WTC11 (cell line): ENCODE measurements at regions of chr14 and their contacts with region 1.

Region 1: DNA sequence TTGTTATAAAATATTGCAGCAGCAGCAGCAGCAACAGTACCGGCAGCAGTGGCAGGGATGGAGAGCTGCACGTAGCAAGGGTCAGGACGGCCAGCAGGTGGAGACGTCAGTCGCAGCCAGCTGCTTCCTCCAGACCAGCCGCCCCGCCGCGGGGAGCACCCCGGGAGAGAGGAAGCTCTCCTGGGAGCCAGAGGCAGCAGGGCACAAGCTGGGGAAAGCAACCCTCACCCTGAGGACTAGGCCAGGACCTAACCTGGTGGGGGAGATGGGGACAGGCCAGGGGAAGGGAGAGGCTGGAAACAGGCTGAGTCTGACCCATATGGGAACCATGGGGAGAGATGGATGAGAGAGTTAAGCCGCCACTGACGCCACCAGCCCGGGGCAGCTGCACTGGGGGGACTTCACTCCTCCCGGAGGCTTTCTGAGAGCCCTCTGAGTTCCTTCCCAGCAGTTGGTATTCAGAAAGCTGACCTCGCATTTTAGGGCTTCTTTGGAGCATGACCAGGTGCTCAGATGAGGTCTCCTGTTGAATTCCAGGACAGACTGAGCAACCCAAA is 56.3 kb downstream of the SPTB start:
- DNase-seq: peak; percentile 86
- ATAC-seq: peak; percentile 91
- H3K4me3 Mint-ChIP-seq: peak overlapping the region; percentile 31; the same call in 1 of the 2 replicates
- H3K27ac Mint-ChIP-seq: no peak overlapping the region
- H3K4me1 Mint-ChIP-seq: peaks cover 27% of the 10 kb centered on the region
- H3K27me3 Mint-ChIP-seq: peaks cover 6% of the 10 kb centered on the region; the same call in 1 of the 2 replicates
- CTCF ChIP-seq: peak; percentile 69; the same call in 1 of the 2 replicates

Region 2: DNA sequence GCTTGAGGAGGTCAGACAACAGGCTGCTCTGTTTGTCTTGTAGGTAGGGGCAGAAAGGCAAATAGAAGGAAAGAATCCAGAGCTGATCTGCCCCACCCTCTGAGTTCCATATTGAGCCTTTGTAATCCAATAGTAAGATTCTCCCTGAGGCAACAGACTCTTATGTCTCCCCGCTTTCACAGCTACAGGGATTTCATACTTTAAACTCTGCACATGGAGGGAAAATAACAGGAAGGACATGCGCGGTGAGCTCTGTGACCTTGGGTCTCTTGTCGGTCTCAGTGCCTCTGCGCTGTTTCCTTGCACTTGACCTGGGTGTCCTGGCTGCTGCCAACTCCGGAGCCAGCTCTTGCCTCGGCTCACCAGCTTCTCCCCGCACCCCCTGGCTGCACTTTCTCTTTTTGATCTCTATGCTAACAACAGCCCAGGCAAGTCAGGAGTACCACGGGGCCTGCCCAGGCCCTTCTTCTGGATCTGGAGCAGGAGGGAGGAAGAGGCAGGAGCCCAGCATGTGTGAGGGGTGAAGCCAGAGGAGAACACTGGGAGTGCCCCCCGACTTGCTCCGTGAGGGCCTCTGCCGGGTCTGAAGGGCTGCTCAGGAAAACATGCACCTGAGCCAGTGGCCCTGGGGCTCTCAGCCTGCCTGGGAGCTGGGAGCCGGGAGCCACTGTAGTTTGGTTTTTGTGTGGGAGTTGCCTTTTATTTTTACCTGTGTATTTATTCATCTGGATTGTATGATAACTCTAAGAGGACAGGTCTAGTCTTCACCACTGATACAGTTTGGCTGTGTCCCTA is 197.7 kb before region 1 on chr14:
- CTCF ChIA-PET with region 1: no interaction called
- POLR2A ChIA-PET with region 1: no interaction called
- DNase-seq: no peak
- ATAC-seq: peak; percentile 51
- H3K4me3 Mint-ChIP-seq: no peak overlapping the region
- H3K27ac Mint-ChIP-seq: no peak overlapping the region
- H3K4me1 Mint-ChIP-seq: peaks cover 18% of the 10 kb centered on the region
- H3K27me3 Mint-ChIP-seq: no peaks in the 10 kb centered on the region
- CTCF ChIP-seq: no peak

Region 3: GRCh38 chr14:64764641-64765520 is 58.5 kb before region 1 on chr14:
- CTCF ChIA-PET with region 1: interaction called, 12 read pairs
- POLR2A ChIA-PET with region 1: no interaction called
- DNase-seq: peak; percentile 86
- ATAC-seq: peak; percentile 54
- H3K4me3 Mint-ChIP-seq: peak overlapping the region; percentile 40
- H3K27ac Mint-ChIP-seq: no peak overlapping the region
- H3K4me1 Mint-ChIP-seq: peaks cover 48% of the 10 kb centered on the region
- H3K27me3 Mint-ChIP-seq: peaks cover 18% of the 10 kb centered on the region
- CTCF ChIP-seq: peak; percentile 95

Region 4: DNA sequence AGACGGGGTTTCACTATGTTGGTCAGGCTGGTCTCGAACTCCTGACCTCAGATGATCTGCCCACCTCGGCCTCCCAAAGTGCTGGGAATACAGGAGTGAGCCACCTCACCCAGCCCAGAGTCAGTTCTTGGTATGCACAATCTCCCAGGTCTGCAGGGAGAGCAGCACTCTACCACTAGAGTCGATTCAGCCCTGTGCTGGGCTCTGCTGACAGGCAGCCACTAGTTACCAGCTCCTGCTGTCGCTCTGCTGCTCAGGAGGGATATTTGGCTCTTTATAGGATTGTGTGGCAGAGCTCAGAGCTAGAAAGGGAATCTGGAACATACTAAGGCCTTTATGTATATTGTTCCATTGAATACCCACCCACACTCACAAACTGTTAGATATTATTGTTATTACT is 12.0 kb after region 1 on chr14:
- CTCF ChIA-PET with region 1: interaction called, 51 read pairs
- POLR2A ChIA-PET with region 1: no interaction called
- DNase-seq: no peak
- ATAC-seq: peak; percentile 39; the same call in 1 of the 2 replicates
- H3K4me3 Mint-ChIP-seq: no peak overlapping the region
- H3K27ac Mint-ChIP-seq: no peak overlapping the region
- H3K4me1 Mint-ChIP-seq: no peaks in the 10 kb centered on the region
- H3K27me3 Mint-ChIP-seq: no peaks in the 10 kb centered on the region
- CTCF ChIP-seq: no peak

Region 5: GRCh38 chr14:64861916-64862315 is 38.5 kb after region 1 on chr14:
- CTCF ChIA-PET with region 1: interaction called, 30 read pairs
- POLR2A ChIA-PET with region 1: no interaction called
- DNase-seq: no peak
- ATAC-seq: peak; percentile 49
- H3K4me3 Mint-ChIP-seq: no peak overlapping the region
- H3K27ac Mint-ChIP-seq: no peak overlapping the region
- H3K4me1 Mint-ChIP-seq: peaks cover 41% of the 10 kb centered on the region
- H3K27me3 Mint-ChIP-seq: no peaks in the 10 kb centered on the region
- CTCF ChIP-seq: no peak

Region 6: DNA sequence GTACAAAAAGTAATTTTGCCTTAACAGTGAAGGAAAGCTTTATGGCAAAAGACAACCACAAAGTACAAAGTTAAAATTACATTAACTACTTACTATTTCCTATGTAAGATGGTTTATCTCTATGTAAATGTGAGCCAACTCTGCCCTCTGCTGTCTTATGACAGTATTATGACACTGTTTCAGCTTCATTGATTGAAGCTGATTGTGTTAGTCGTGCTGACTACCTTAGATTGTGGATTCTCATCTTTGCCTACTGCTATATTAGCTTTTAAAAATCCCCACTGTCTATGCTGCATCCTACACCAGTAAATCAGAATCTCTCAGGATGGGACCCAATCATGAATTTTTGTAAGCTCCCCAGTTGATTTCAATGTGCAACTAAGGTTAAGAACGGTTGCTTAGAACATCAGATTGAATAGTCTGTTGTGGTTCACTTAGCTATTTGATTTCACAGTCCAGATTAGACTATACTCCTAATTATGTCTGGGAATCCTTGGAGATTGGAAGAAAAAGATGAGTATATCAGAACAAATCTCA is 68.5 kb after region 1 on chr14:
- CTCF ChIA-PET with region 1: interaction called, 204 read pairs
- POLR2A ChIA-PET with region 1: interaction called, 4 read pairs
- DNase-seq: no peak
- ATAC-seq: peak; percentile 78
- H3K4me3 Mint-ChIP-seq: no peak overlapping the region
- H3K27ac Mint-ChIP-seq: no peak overlapping the region
- H3K4me1 Mint-ChIP-seq: no peaks in the 10 kb centered on the region
- H3K27me3 Mint-ChIP-seq: peaks cover 3% of the 10 kb centered on the region; the same call in 1 of the 2 replicates
- CTCF ChIP-seq: peak; percentile 29; the same call in 1 of the 2 replicates

Region 7: GRCh38 chr14:65019944-65020566 is 196.7 kb after region 1 on chr14:
- CTCF ChIA-PET with region 1: interaction called, 10 read pairs
- POLR2A ChIA-PET with region 1: no interaction called
- DNase-seq: no peak
- ATAC-seq: peak; percentile 87
- H3K4me3 Mint-ChIP-seq: no peak overlapping the region
- H3K27ac Mint-ChIP-seq: no peak overlapping the region
- H3K4me1 Mint-ChIP-seq: peaks cover 3% of the 10 kb centered on the region; the same call in 1 of the 2 replicates
- H3K27me3 Mint-ChIP-seq: no peaks in the 10 kb centered on the region
- CTCF ChIP-seq: 0 out of 2 replicates have a peak, but pooled peaks have one; percentile 20